Activated T-helper 1 cell treated with anti-CD3 and anti-CD28 coated beads, Interleukin-12 subunit alpha, Interleukin-12 subunit beta, Interleukin-2, Interleukin-4 antibody, amounts not matched to agents 30 ng/mL and 10 ng/mL and 1 ng/mL, durations not matched to agents 14 hours and 24 hours and 36 hours (primary cell): ENCODE measurements at regions of chr22 and their contacts with region 1.

Region 1: GRCh38 chr22:38506118-38506962 is at the start of gene DDX17:
- DNase-seq: peak; percentile 93
- H3K4me3 Mint-ChIP-seq: peak within 1 kb of the TSS; percentile 99
- H3K27ac Mint-ChIP-seq: peak within 1 kb of the TSS; percentile 98
- H3K4me1 Mint-ChIP-seq: peaks cover 42% of the 10 kb centered on the region
- H3K27me3 Mint-ChIP-seq: no peaks in the 10 kb centered on the region
- total RNA-seq, gene DDX17: 356 and 358 TPM in 2 replicates

Region 2: GRCh38 chr22:38284042-38284402 is 222.3 kb before region 1 on chr22:
- intact Hi-C with region 1: no loop called
- DNase-seq: no peak
- H3K4me3 Mint-ChIP-seq: no peak overlapping the region
- H3K27ac Mint-ChIP-seq: no peak overlapping the region
- H3K4me1 Mint-ChIP-seq: no peaks in the 10 kb centered on the region
- H3K27me3 Mint-ChIP-seq: no peaks in the 10 kb centered on the region

Region 3: DNA sequence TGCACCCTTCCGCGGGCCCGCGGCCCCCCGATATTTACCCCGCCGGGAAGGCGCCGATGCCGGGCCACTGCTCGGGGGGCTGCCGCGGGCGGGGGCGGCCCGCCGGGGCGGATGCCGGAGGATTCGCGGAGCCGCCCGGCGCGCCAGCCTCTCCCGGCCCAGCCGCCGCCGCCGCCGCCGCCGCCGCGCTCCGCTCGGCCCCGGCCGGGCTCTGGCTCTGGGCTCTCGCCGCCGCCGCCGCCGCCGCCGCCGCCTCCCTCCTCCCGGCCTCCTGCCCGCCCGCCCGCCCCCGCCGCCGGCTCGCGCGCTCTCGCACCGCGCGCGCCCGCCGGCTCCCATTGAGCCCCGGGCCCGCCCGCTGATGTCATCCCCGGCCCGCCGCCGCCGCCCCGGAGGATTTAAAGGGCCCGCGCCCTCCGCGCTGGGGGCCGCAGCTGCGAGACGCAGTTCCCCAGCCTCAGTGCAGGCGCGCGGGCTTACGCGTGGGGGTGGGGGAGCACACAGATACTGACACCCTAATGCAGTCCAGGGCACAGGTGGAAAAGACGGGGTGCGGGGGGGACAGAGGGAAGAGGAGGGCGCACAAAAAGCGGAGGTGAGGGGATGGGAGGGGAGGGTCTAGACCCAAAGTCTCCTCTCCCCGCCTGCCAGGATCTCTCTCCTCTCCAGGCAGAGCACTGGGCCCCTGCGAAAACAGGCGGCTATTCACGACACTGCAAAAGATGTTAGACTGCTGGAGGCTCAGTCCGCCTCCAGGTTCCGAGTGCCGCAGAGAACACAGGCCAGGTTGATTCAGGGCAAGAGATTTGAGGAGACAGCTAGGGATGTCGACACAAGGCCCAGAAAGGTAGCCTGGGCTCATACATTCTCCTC is 189.0 kb before region 1 on chr22 and contains the start of gene CSNK1E:
- intact Hi-C with region 1: loop called (anchors 5 kb)
- DNase-seq: peak; percentile 74
- H3K4me3 Mint-ChIP-seq: peak within 1 kb of the TSS; percentile 90
- H3K27ac Mint-ChIP-seq: peak within 1 kb of the TSS; percentile 87
- H3K4me1 Mint-ChIP-seq: peaks cover 44% of the 10 kb centered on the region
- H3K27me3 Mint-ChIP-seq: no peaks in the 10 kb centered on the region
- total RNA-seq, gene CSNK1E: 151 and 154 TPM in 2 replicates

Region 4: GRCh38 chr22:38490915-38491314 is 15.4 kb before region 1 on chr22:
- intact Hi-C with region 1: loop called (anchors 2 kb)
- DNase-seq: no peak
- H3K4me3 Mint-ChIP-seq: no peak overlapping the region
- H3K27ac Mint-ChIP-seq: peak overlapping the region; percentile 81
- H3K4me1 Mint-ChIP-seq: peaks cover 56% of the 10 kb centered on the region
- H3K27me3 Mint-ChIP-seq: no peaks in the 10 kb centered on the region

Region 5: DNA sequence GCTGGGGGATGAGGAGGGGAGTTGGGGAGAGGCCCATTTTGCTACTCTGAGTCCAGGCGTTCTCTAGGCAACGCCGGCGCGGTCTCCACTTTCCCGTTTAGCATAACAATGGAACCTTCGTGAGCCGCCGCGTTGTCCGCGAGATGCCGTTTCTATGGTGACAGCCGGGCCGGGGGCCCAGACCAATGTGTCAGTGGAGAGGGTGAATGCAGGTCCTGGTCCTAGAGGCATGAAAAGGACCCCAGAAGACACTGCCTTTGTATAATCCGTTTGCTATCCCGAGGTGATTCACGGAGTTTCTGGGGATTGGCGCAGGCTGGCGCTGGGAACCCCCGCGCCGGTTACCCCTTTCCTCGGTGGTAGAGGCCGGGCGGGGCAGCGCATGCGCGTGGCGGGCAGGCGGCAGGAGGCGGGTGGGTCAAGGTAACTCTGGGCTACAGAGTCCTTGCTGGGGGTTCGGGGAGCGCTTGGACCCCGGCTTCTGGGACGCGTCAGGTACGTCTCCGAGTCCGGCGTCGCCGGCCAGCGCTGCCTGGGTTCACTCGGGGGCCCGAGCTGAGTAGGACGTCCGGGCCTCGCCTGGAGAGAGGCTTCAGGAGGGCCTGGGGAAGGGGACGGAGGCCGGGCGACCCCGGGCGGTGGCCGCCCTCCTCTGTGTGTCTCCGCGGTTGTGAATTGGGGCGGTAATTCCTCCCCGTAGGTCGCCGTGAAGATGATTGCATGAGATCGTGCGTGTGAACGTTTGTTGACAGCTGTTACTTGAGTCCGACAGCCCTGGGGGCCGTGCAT is 150.1 kb after region 1 on chr22 and contains the starts of genes CBY1 and FAM227A:
- intact Hi-C with region 1: loop called (anchors 1 kb)
- DNase-seq: peak; percentile 83
- H3K4me3 Mint-ChIP-seq: peak within 1 kb of the TSS; percentile 93
- H3K27ac Mint-ChIP-seq: peak within 1 kb of the TSS; percentile 98
- H3K4me1 Mint-ChIP-seq: peaks cover 16% of the 10 kb centered on the region
- H3K27me3 Mint-ChIP-seq: no peaks in the 10 kb centered on the region
- total RNA-seq, gene CBY1: 8.6 and 8.8 TPM in 2 replicates
- total RNA-seq, gene FAM227A: 0.16 and 0.78 TPM in 2 replicates

Region 6: GRCh38 chr22:38755911-38756532 is 249.7 kb after region 1 on chr22 and contains the start of gene SUN2:
- intact Hi-C with region 1: loop called (anchors 5 kb)
- DNase-seq: peak; percentile 94
- H3K4me3 Mint-ChIP-seq: peak within 1 kb of the TSS; percentile 95
- H3K27ac Mint-ChIP-seq: peak within 1 kb of the TSS; percentile 97
- H3K4me1 Mint-ChIP-seq: peaks cover 59% of the 10 kb centered on the region
- H3K27me3 Mint-ChIP-seq: no peaks in the 10 kb centered on the region
- total RNA-seq, gene SUN2: 146 and 154 TPM in 2 replicates